Panc1 (cell line): ENCODE measurements at regions of chr18 and their contacts with region 1.

Region 1: DNA sequence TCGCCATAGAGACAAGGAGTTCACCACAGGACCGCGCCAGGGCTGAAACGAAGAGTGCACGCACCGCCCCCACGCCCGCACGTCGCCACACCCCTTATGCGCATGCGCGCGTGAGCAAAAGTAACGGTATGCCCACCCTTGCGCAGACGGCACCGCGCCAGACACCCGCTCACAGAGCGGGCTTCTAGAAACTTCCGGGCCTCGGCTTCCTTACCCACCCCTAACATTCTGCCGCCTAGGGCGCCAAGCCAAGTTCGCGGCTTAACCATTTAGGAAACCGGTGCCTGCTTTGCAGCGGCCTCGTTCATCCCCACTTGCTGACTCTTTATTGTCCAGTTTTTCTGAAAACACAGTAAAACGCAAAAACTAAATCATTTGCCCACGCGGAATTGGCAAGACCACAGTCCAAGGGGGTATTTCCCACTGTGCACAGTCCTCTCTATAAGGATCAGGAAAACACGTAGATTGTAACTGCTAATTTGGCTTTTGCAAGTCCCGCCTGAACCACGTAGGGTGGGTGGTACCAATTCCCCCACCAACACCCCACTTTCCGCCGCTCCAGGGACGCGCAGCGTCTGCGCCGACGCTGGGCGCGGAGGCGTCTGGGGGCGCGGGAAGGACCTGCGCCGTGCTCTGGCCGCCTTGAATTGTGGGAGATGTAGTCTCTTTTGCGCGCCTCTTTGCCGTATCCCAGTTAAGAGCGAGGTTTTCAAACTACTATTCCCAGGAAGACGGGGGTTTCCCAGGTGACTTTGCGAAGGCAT is at the starts of genes FBXO15 and TIMM21:
- DNase-seq: peak; percentile 99
- ATAC-seq: peak; percentile 98
- H3K4me3 ChIP-seq: peak within 1 kb of the TSS; percentile 92 to 99
- H3K27ac ChIP-seq: peak within 1 kb of the TSS; percentile 100
- H3K4me1 ChIP-seq: peaks cover 19% of the 10 kb centered on the region
- H3K27me3 ChIP-seq: peaks cover 7% of the 10 kb centered on the region; the same call in 1 of the 2 replicates
- CTCF ChIP-seq: no peak
- total RNA-seq, gene FBXO15: 1.9 TPM
- total RNA-seq, gene TIMM21: 82.0 TPM

Region 2: DNA sequence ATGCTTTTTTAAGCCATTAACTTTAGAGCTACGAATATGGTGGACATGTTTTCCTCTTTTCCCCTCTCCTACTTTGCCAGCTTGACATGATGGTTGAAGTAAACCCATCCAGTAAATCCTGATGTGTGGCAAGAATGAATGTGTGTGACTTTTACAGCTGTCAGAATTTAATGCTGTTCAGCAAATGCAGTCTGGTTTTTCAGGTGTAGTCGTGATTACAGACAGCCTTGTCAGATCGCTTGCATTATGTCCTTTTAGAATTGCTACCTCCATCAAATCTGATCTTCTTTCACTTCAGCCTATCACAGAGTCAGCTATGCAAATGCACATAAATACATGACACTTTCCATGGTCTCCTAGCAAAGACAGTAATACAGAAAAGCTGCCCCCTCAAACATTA is 278.8 kb before region 1 on chr18:
- CTCF ChIA-PET with region 1: no interaction called
- POLR2A ChIA-PET with region 1: interaction called, 14 read pairs
- in situ Hi-C with region 1: no loop called
- intact Hi-C with region 1: no loop called
- DNase-seq: no peak
- ATAC-seq: no peak
- H3K4me3 ChIP-seq: no peak overlapping the region
- H3K27ac ChIP-seq: no peak overlapping the region
- H3K4me1 ChIP-seq: no peaks in the 10 kb centered on the region
- H3K27me3 ChIP-seq: peaks cover 20% of the 10 kb centered on the region
- CTCF ChIP-seq: no peak

Region 3: GRCh38 chr18:74069178-74070055 is 78.5 kb before region 1 on chr18:
- CTCF ChIA-PET with region 1: no interaction called
- POLR2A ChIA-PET with region 1: no interaction called
- in situ Hi-C with region 1: no loop called
- intact Hi-C with region 1: no loop called
- DNase-seq: no peak
- ATAC-seq: no peak
- H3K4me3 ChIP-seq: no peak overlapping the region
- H3K27ac ChIP-seq: no peak overlapping the region
- H3K4me1 ChIP-seq: no peaks in the 10 kb centered on the region
- H3K27me3 ChIP-seq: peaks cover 31% of the 10 kb centered on the region
- CTCF ChIP-seq: no peak